Panc1 (cell line): ENCODE measurements at regions of chr6 and their contacts with region 1.

Region 1: DNA sequence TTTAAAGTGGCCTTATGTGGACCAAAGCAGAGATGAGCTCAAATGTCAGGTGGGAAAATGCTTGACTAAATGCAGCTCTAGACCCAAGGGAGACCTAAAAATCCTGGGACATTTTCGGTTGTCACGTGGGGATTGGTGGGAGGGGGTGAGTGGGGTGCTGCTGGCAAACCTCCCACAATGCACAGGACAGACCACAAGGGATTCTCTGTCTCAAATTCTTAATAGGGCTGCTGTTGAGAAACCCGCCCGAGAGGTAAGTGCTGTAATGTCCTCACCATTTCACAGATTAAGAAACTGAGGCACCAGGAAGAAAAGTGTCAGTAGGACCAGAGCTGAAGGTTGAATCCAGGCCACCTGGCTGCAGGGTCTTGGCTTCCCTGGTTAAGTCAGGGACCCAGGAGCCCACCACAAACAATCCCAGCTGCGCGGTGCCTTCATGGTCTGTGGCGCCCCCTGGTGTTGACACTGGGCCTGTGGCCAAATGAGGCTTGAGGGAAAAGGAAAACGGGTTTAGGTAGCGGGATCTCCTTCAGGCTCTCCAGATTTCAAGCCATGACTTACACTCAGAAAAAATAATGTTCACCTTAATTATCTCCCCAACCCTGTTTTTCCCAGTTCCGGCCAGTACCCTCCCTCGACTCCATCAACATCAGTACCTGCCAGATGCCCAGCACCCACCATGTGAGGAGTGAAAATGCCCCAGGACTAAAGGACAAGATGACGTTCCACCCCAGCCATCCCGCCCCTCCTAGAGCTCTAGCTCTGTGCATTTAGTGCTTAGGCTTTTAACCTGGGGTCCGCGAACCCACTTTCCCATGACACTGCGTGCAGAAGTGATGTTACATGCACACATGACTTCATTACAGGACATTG is 7.2 kb downstream of the HLA-G start:
- DNase-seq: no peak
- ATAC-seq: peak; percentile 84
- H3K4me3 ChIP-seq: no peak overlapping the region
- H3K27ac ChIP-seq: no peak overlapping the region
- H3K4me1 ChIP-seq: no peaks in the 10 kb centered on the region; the same call in 1 of the 2 replicates
- H3K27me3 ChIP-seq: peaks cover 20% of the 10 kb centered on the region
- CTCF ChIP-seq: peak; percentile 83

Region 2: DNA sequence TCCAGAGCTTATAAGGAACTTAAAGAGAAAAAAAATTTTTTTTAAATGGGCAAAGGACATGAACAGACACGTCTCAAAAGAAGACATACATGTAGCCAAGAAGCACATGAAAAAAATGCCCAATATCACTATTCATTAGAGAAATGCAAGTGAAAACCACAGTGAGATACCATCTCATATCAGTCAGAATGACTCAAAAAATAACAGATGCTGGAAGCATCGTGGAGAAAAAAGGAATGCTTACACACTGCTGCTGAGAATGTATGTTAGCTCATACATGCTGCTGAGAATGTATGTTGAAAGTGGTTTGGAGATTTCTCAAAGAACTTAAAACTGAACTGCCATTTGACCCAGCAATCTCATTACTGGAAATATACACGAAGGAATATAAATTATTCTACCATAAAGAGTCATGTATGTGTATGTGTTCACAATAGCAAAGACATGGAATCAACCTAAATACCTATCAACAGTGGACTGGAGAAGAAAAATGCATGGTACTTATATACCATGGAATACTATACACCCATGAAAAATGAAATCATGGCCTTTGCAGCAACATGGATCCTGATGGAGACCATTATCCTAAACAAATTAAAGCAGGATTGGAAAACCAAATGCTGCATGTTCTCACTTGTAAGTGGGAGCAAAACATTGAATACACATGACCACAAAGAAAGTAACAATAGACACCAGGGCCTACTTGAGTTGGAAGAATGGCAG is 383.2 kb before region 1 on chr6:
- CTCF ChIA-PET with region 1: no interaction called
- POLR2A ChIA-PET with region 1: no interaction called
- in situ Hi-C with region 1: no loop called
- intact Hi-C with region 1: no loop called
- DNase-seq: no peak
- ATAC-seq: no peak
- H3K4me3 ChIP-seq: no peak overlapping the region
- H3K27ac ChIP-seq: no peak overlapping the region
- H3K4me1 ChIP-seq: no peaks in the 10 kb centered on the region
- H3K27me3 ChIP-seq: no peaks in the 10 kb centered on the region; the same call in 1 of the 2 replicates
- CTCF ChIP-seq: no peak

Region 3: DNA sequence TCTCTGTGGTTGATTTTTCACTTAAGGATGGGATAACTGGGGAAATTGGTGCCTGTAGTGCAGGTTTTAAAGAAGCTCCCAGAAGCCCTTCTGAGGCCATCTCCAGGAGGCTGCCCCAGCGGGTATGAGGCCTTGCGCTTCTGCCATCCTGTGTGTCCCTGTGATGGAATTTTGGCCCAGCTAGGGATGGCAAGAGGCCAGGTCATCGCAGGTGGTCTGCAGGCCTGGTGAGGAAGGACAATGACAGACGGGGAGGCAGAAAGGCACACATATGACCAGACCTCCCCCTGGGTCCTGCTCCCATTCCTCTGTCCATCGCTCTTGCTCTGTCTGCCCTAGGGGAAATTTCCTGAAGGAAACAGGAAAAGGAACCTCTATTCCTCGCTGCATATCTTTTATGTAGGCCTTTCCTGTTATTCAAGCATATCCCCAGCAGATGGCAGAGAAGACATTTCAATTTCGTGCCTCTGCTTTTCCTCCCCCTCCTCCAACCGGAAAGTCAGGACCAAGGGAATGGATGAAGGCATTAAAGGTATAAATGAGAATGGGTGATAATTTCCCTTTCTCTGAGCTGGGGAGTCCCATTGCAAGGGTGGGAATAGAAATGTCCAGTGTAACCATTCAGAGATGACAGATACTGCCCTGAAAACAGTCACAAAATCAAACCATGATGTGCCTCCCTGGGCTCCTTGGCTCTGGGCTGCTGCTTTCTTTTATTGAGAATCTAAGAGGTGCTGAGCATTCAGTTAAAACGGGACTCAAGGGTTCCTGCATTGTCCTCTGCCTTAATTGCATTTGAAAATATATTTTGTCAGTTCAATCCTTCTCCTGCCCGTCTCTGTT is 129.2 kb before region 1 on chr6:
- CTCF ChIA-PET with region 1: no interaction called
- POLR2A ChIA-PET with region 1: no interaction called
- in situ Hi-C with region 1: no loop called
- intact Hi-C with region 1: loop called (anchors 1 kb)
- DNase-seq: no peak
- ATAC-seq: peak; percentile 60; the same call in 1 of the 2 replicates
- H3K4me3 ChIP-seq: no peak overlapping the region
- H3K27ac ChIP-seq: no peak overlapping the region
- H3K4me1 ChIP-seq: no peaks in the 10 kb centered on the region
- H3K27me3 ChIP-seq: peaks cover 19% of the 10 kb centered on the region
- CTCF ChIP-seq: peak; percentile 67

Region 4: GRCh38 chr6:29737707-29738630 is 96.8 kb before region 1 on chr6:
- CTCF ChIA-PET with region 1: interaction called, 8 read pairs
- POLR2A ChIA-PET with region 1: no interaction called
- in situ Hi-C with region 1: no loop called
- intact Hi-C with region 1: loop called (anchors 1 kb)
- DNase-seq: peak; percentile 62
- ATAC-seq: peak; percentile 94
- H3K4me3 ChIP-seq: no peak overlapping the region
- H3K27ac ChIP-seq: no peak overlapping the region
- H3K4me1 ChIP-seq: no peaks in the 10 kb centered on the region
- H3K27me3 ChIP-seq: 0 out of 2 replicates have a peak, but pooled peaks cover 2% of the 10 kb centered on the region
- CTCF ChIP-seq: peak; percentile 87

Region 5: GRCh38 chr6:29816030-29816429 is 18.8 kb before region 1 on chr6:
- CTCF ChIA-PET with region 1: no interaction called
- POLR2A ChIA-PET with region 1: no interaction called
- in situ Hi-C with region 1: no loop called
- intact Hi-C with region 1: loop called (anchors 1 kb)
- DNase-seq: no peak
- ATAC-seq: no peak
- H3K4me3 ChIP-seq: no peak overlapping the region
- H3K27ac ChIP-seq: no peak overlapping the region
- H3K4me1 ChIP-seq: no peaks in the 10 kb centered on the region
- H3K27me3 ChIP-seq: peaks cover 3% of the 10 kb centered on the region
- CTCF ChIP-seq: no peak

Region 6: GRCh38 chr6:29887819-29888776 is 53.3 kb after region 1 on chr6:
- CTCF ChIA-PET with region 1: no interaction called
- POLR2A ChIA-PET with region 1: no interaction called
- in situ Hi-C with region 1: no loop called
- intact Hi-C with region 1: no loop called
- DNase-seq: peak; percentile 18
- ATAC-seq: peak; percentile 92
- H3K4me3 ChIP-seq: peak overlapping the region; percentile 58 to 73
- H3K27ac ChIP-seq: peak overlapping the region; percentile 86
- H3K4me1 ChIP-seq: peaks cover 10% of the 10 kb centered on the region
- H3K27me3 ChIP-seq: no peaks in the 10 kb centered on the region
- CTCF ChIP-seq: no peak